ENCODE measurements at regions of chr5 and their contacts with region 1.

Region 1: GRCh38 chr5:77437194-77437593 is 54.9 kb downstream of the WDR41 start:
- DNase-seq: no peak

Region 2: DNA sequence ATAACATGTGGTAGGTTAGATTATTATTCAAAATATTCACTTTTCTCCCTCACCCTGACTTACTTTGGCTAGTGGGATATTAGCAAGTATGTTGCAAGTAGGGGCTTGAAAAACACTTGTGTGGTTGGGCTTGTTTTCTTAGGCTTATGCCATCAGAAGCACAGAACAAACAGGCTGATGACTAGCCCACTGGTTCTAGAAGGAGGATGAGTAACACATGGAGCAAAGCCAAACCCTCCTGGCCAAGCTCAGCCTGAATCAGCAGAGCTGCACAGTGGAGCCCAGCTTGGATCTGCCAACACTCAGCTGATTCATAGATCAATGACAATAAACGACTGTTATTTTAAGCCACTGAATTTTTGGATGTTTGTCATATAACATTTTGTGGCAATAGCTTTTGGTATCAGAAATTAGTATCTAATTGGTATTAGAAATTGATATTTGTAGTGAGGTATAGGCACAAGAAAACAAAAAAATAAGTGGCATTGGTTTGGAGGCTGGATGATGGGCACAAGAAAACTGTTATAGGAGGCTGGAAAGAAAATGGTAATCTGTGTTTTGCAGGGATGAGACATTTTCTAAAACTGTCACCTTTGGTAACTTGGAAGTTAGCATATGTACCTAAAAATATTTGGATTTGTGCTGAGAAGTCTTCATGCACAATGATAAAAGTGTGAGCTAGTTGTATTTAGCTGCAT is 304.0 kb before region 1 on chr5:
- intact Hi-C with region 1: loop called (anchors 5 kb)
- DNase-seq: no peak